A673 (cell line): ENCODE measurements at regions of chr4 and their contacts with region 1.

Region 1: GRCh38 chr4:99414389-99414788 is 20.8 kb downstream of the ADH7 start:
- DNase-seq: no peak
- H3K4me3 ChIP-seq: no peak overlapping the region
- H3K27ac ChIP-seq: no peak overlapping the region
- H3K4me1 ChIP-seq: no peaks in the 10 kb centered on the region
- H3K27me3 ChIP-seq: no peaks in the 10 kb centered on the region
- CTCF ChIP-seq: no peak

Region 2: DNA sequence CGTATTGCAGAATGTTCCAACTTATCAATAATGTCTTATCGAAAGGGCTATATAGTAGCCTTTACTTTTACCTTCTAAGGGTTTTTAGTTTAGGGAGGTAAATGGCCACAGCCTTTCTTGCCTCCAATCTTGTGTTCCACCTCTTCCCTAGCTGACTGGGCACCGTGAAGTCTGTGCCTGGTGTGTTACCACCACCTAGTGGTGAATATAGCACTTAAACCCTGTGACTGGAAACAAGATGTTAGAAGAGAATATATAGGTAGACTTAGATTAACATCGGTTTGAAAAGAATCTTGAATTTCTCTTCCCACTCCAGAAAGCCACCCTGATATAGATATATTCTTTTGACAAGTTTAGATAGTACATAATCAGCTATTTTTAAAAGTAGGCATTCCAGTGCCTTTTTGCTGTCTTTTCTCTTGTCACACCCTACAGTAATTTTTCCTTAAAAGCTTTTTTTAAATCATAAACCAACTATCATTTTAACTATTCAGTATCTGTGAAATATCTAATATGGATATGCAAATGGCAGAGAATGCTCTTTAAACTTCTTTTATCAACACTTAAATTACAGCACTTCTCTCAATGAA is 48.6 kb after region 1 on chr4:
- CTCF ChIA-PET with region 1: no interaction called
- POLR2A ChIA-PET with region 1: no interaction called
- intact Hi-C with region 1: loop called (anchors 5 kb)
- DNase-seq: peak; percentile 79
- H3K4me3 ChIP-seq: no peak overlapping the region
- H3K27ac ChIP-seq: no peak overlapping the region
- H3K4me1 ChIP-seq: no peaks in the 10 kb centered on the region
- H3K27me3 ChIP-seq: peaks cover 19% of the 10 kb centered on the region
- CTCF ChIP-seq: peak; percentile 87

Region 3: GRCh38 chr4:99808260-99808857 is 394.0 kb after region 1 on chr4:
- CTCF ChIA-PET with region 1: no interaction called
- POLR2A ChIA-PET with region 1: no interaction called
- intact Hi-C with region 1: loop called (anchors 10 kb)
- DNase-seq: peak; percentile 62
- H3K4me3 ChIP-seq: no peak overlapping the region
- H3K27ac ChIP-seq: no peak overlapping the region
- H3K4me1 ChIP-seq: no peaks in the 10 kb centered on the region
- H3K27me3 ChIP-seq: peaks cover 16% of the 10 kb centered on the region
- CTCF ChIP-seq: peak; percentile 73